ENCODE measurements at regions of chr2 and their contacts with region 1.

Region 1: DNA sequence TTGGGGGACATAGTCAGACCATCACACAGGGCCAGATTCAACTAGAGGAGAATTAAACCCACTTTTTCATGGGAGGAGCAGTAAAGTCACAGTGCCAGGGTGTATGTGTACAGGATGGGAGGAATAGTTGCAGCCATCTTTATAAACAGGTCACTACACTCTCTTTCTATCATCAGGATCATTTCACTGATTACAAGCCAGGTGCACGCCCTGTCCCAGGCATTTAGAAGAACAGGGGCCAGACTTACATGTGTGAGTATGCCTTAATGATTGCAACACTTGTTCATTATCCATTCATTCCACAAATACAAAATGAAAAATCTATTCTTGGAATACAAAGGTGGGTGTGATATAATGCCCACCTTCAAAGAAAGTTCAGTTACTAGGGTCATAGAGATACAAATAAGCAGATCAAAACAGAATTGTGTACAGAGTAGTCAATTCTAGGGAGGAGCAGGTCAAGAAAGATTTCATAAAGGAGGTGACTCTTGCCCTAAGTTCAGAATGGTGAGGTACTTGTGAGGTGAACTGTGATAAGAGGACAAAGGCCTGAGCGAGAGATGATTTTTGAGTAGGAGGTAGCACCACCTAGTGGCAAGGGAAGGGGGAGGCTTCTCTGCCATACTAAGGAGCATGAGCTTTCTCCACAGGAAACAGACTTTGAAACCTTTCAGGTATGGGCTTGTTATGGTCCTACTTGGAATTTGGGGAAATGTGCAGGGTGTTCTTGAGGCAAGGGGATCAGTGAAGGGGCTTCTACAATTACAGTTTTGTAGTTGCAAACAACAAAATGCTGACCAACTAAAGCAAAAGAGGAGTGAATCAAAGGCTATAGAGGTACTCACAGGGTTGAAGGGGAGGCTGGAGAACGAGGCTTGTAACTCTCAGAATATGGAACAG is 156.3 kb downstream of the SUCLG1 start:
- DNase-seq: peak; percentile 47
- ATAC-seq: peak; percentile 99
- H3K4me3 ChIP-seq: no peak overlapping the region
- H3K27ac ChIP-seq: no peak overlapping the region
- H3K4me1 ChIP-seq: peaks cover 0 to 2% of the 10 kb centered on the region in 2 experiments; a peak in 2 of 4 replicates
- H3K27me3 ChIP-seq: no peaks in the 10 kb centered on the region
- CTCF ChIP-seq: peak; percentile 58 to 91 (median 88); a peak in 5 of 6 replicates
- POLR2A ChIP-seq: no peak
- RAD21 ChIP-seq: peak; percentile 83

Region 2: GRCh38 chr2:83782122-83782521 is 520.6 kb before region 1 on chr2:
- CTCF ChIA-PET with region 1: interaction called, 4 read pairs
- POLR2A ChIA-PET with region 1: no interaction called
- RAD21 ChIA-PET with region 1: no interaction called
- intact Hi-C with region 1: loop called (anchors 2 kb)
- DNase-seq: no peak
- ATAC-seq: no peak
- H3K4me3 ChIP-seq: no peak overlapping the region
- H3K27ac ChIP-seq: no peak overlapping the region
- H3K4me1 ChIP-seq: no peaks in the 10 kb centered on the region
- H3K27me3 ChIP-seq: no peaks in the 10 kb centered on the region
- CTCF ChIP-seq: peak in 1 of 3 experiments; percentile 15; a peak in 1 of 6 replicates
- POLR2A ChIP-seq: no peak
- RAD21 ChIP-seq: peak; percentile 31; the same call in 1 of the 2 replicates

Region 3: GRCh38 chr2:84323890-84324289 is 21.1 kb after region 1 on chr2:
- CTCF ChIA-PET with region 1: no interaction called
- POLR2A ChIA-PET with region 1: no interaction called
- RAD21 ChIA-PET with region 1: no interaction called
- intact Hi-C with region 1: no loop called
- DNase-seq: no peak
- ATAC-seq: no peak
- H3K4me3 ChIP-seq: no peak overlapping the region
- H3K27ac ChIP-seq: no peak overlapping the region
- H3K4me1 ChIP-seq: no peaks in the 10 kb centered on the region
- H3K27me3 ChIP-seq: 0 out of 2 replicates have a peak, but pooled peaks cover 6% of the 10 kb centered on the region
- CTCF ChIP-seq: no peak
- POLR2A ChIP-seq: no peak
- RAD21 ChIP-seq: no peak

Region 4: DNA sequence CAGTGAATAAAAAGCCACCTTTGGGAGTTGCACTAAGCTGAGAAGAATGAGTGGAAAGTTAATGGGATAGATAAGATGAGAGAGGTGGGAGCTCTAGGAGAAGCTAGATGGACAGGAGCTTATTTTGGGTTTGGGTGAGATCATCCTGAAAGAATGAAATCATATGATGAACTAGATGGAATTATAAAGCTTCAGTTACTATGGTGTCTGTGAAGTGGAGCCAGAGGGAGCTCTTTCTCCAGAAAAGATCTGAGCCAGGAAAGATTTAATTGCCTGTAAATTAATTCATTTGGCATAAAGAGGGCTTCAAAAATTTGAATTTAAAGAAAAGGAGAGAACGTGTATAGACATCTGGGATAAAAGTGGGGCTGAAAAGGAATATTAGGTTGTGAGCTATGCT is 223.8 kb after region 1 on chr2:
- CTCF ChIA-PET with region 1: no interaction called
- POLR2A ChIA-PET with region 1: no interaction called
- RAD21 ChIA-PET with region 1: no interaction called
- intact Hi-C with region 1: no loop called
- DNase-seq: no peak
- ATAC-seq: peak; percentile 20; the same call in 1 of the 2 replicates
- H3K4me3 ChIP-seq: no peak overlapping the region
- H3K27ac ChIP-seq: no peak overlapping the region
- H3K4me1 ChIP-seq: no peaks in the 10 kb centered on the region
- H3K27me3 ChIP-seq: no peaks in the 10 kb centered on the region
- CTCF ChIP-seq: peak; percentile 17 to 68 (median 48); a peak in 5 of 6 replicates
- POLR2A ChIP-seq: no peak
- RAD21 ChIP-seq: peak; percentile 66

Measured in HCT116 (cell line).